Left cardiac atrium (tissue), 4 donors: ENCODE measurements at regions of chr7 and their contacts with region 1.

Region 1: DNA sequence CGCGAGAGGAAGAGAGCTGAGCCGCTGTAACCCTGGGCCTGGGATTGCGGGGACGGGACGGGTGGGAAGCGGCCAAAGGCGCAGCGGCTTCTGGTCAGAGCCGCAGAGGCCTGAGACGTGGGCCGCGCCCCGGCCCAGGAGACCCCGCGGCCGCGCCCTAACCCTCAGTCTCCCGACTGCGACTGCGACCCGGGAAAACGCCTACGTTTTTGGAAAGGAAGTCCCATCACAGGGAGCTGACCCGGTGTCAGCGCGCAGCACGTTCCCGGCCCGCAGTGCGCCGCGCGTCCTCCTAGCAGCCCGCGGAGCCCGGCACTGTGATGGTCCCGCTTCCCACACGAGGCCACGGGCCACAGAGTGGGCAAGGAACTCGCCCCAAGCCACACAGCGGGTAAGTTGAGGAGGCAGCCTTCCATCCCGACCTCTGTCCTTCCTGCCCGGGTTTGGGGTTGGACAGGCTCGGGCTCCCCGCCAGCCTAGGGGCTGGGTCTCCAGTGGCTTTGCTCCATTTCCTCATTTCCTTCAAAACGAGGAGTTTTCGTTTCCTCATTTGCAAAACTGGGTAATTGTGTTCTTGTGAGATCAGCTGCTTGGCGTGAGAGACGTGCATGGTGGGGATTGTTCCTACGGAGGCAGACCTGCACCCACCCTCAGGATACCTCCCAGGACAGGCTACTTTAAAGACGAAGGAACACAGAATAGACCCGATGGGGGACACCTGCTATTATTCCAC is 1.2 kb downstream of the GPNMB start:
- DNase-seq: peak; percentile 58
- ATAC-seq: peak; percentile 73 to 82

Region 2: GRCh38 chr7:23105644-23106056 is 142.1 kb before region 1 on chr7 and contains the start of gene KLHL7:
- intact Hi-C with region 1: loop called in 1 of 2 experiments (anchors 10 kb)
- DNase-seq: peak; percentile 97
- ATAC-seq: peak; percentile 99 to 100
- total RNA-seq, gene KLHL7: 68.3 to 81.6 TPM

Region 3: GRCh38 chr7:23200331-23200730 is 47.4 kb before region 1 on chr7:
- intact Hi-C with region 1: loop called in 1 of 2 experiments (anchors 5 kb)
- DNase-seq: no peak
- ATAC-seq: peak; percentile 51 to 88